HepG2 (cell line): ENCODE measurements at regions of chr6 and their contacts with region 1.

Region 1: GRCh38 chr6:158387036-158387435 is 74.8 kb downstream of the TULP4 start:
- DNase-seq: peak; percentile 46
- ATAC-seq: peak; percentile 49; the same call in 2 of the 3 replicates
- H3K4me3 ChIP-seq: no peak overlapping the region
- H3K27ac ChIP-seq: no peak overlapping the region
- H3K4me1 ChIP-seq: peaks cover 11% of the 10 kb centered on the region; the same call in 1 of the 2 replicates
- H3K27me3 ChIP-seq: no peaks in the 10 kb centered on the region
- CTCF ChIP-seq: peak; percentile 31
- EP300 ChIP-seq: no peak
- POLR2A ChIP-seq: no peak
- RAD21 ChIP-seq: no peak

Region 2: DNA sequence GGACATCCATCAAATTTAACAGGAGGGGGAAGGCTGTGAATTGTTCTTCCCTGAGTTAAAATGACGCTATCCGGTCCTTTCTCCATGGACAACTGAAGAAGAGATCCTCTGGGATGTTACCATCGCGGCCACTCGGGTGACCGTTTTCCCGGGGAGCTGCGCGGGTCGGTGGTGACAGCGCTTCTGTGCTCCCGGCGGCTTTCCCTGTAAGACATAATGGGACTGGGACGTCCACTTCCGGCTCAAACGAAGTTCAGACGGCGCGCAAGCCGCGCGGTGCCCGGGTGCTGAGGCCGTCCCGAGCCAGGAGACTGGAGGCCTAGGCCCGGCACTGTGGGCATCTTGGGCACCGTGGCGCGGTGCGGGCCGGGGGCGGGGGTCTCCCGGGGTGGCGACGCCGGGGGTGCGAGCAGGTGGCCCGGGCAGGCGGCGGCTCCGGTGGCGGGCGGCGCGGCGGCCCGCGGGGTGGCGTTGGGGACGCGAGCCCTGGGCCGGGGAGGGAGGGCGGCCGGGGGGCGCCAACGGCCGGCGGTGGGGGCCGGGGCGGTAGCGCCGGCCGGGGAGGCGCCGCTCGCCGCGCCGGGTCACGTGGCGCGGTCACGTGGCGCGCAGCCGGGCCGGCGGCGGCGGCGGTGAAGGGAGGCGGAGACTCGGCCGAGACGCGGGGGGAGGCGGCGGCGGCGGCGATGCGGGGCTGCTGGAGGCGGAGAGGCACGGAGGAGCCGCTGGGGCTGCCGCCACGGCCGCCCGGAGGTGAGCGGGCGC is 155.3 kb before region 1 on chr6:
- CTCF ChIA-PET with region 1: no interaction called
- POLR2A ChIA-PET with region 1: no interaction called
- in situ Hi-C with region 1: loop called (anchors 5 kb)
- intact Hi-C with region 1: no loop called
- DNase-seq: peak; percentile 74
- ATAC-seq: peak; percentile 71
- H3K4me3 ChIP-seq: peak overlapping the region; percentile 63 to 87 (median 78)
- H3K27ac ChIP-seq: peak overlapping the region; percentile 81
- H3K4me1 ChIP-seq: peaks cover 49% of the 10 kb centered on the region
- H3K27me3 ChIP-seq: no peaks in the 10 kb centered on the region; a peak in 1 of 5 replicates
- CTCF ChIP-seq: no peak
- EP300 ChIP-seq: no peak
- POLR2A ChIP-seq: peak; percentile 52 to 72
- RAD21 ChIP-seq: no peak

Region 3: DNA sequence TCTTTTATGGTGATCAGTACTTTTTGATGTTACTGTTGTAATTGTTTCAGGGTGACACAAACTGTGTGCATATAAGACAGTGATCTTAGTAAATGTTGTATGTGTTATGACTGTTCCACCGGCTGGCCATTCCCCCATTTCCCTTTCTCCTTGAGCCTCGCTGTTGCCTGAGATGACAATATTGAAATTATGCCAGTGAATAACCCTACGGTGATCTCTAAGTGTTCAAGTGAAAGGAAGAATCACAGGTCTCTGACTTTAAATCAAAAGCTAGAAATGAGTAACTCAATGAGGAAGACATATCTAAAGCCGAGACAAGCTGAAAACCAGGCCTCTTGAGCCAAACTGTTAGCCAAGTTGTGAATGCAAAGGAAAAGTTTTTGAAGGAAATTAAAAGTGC is 42.5 kb before region 1 on chr6:
- CTCF ChIA-PET with region 1: no interaction called
- POLR2A ChIA-PET with region 1: no interaction called
- in situ Hi-C with region 1: no loop called
- intact Hi-C with region 1: loop called (anchors 5 kb)
- DNase-seq: no peak
- ATAC-seq: no peak
- H3K4me3 ChIP-seq: no peak overlapping the region
- H3K27ac ChIP-seq: no peak overlapping the region
- H3K4me1 ChIP-seq: peaks cover 61% of the 10 kb centered on the region
- H3K27me3 ChIP-seq: no peaks in the 10 kb centered on the region
- CTCF ChIP-seq: no peak
- EP300 ChIP-seq: no peak
- POLR2A ChIP-seq: no peak
- RAD21 ChIP-seq: no peak